ENCODE measurements at regions of chr10 and their contacts with region 1.

Region 1: GRCh38 chr10:80459047-80459931 is 5.2 kb downstream of the TSPAN14 start:
- DNase-seq: peak; percentile 84
- ATAC-seq: peak; percentile 52
- H3K4me3 Mint-ChIP-seq: peak overlapping the region; percentile 99
- H3K27ac Mint-ChIP-seq: peak overlapping the region; percentile 98
- H3K4me1 Mint-ChIP-seq: peaks cover 82% of the 10 kb centered on the region
- H3K27me3 Mint-ChIP-seq: no peaks in the 10 kb centered on the region

Region 2: GRCh38 chr10:79230328-79230830 is 1228.9 kb before region 1 on chr10:
- CTCF ChIA-PET with region 1: no interaction called
- POLR2A ChIA-PET with region 1: no interaction called
- intact Hi-C with region 1: no loop called
- DNase-seq: no peak
- ATAC-seq: no peak
- H3K4me3 Mint-ChIP-seq: no peak overlapping the region
- H3K27ac Mint-ChIP-seq: no peak overlapping the region
- H3K4me1 Mint-ChIP-seq: no peaks in the 10 kb centered on the region
- H3K27me3 Mint-ChIP-seq: no peaks in the 10 kb centered on the region

Region 3: DNA sequence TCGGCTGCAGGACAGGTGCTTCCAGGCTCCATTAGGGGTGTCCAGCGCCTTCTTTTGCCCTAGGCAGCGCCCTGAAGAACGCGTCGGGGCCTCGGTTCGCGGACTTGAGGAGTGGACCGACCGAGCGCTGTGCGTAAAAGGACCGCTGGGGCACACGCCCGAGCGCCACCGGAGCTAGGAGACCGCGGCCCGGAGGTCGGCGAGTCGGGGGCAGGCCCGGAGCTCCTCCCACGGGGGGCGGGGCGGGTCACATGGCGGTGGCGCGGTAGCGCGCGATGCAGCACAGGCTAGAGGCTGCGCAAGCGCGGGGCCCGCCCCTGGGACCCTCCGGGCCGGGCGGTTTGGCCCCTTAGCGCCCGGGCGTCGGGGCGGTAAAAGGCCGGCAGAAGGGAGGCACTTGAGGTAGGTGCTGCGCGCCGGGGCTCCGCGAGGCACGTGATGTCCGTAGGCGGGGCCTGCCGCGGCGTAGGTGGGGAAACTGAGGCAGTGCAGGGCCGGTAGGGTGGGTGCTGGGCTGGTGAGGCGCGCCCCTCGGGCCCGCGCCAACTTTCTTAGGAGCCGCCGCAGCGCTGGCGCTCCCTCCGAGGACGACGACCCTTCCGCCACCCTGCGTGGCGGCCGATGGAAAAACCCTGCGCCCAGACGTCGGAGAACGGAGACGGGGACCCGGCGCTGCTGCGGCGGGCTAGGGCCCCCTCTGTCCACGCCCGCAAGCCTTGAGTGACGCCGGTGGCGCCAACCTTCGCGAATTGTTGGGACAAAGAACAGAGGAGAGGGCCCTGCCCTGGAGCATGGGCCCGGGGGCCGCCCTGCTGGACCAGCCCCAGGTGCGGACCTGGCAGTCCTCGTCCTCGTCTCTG is 50.8 kb before region 1 on chr10 and contains the start of gene PRXL2A:
- CTCF ChIA-PET with region 1: interaction called, 6 read pairs
- POLR2A ChIA-PET with region 1: no interaction called
- intact Hi-C with region 1: loop called in 1 of 2 experiments (anchors 2 kb)
- DNase-seq: peak; percentile 91
- ATAC-seq: peak; percentile 84
- H3K4me3 Mint-ChIP-seq: peak within 1 kb of the TSS; percentile 76
- H3K27ac Mint-ChIP-seq: peak within 1 kb of the TSS; percentile 94
- H3K4me1 Mint-ChIP-seq: peaks cover 40% of the 10 kb centered on the region
- H3K27me3 Mint-ChIP-seq: no peaks in the 10 kb centered on the region
- total RNA-seq, gene PRXL2A: 15.0 to 17.6 TPM

Region 4: GRCh38 chr10:80472234-80473095 is 13.2 kb after region 1 on chr10:
- CTCF ChIA-PET with region 1: interaction called, 73 read pairs
- POLR2A ChIA-PET with region 1: interaction called, 9 read pairs
- intact Hi-C with region 1: loop called (anchors 1 kb)
- DNase-seq: peak; percentile 66
- ATAC-seq: peak; percentile 80
- H3K4me3 Mint-ChIP-seq: peak overlapping the region; percentile 61
- H3K27ac Mint-ChIP-seq: peak overlapping the region; percentile 91
- H3K4me1 Mint-ChIP-seq: peaks cover 93% of the 10 kb centered on the region
- H3K27me3 Mint-ChIP-seq: no peaks in the 10 kb centered on the region

Measured in activated CD4-positive, alpha-beta T cell treated with anti-CD3 and anti-CD28 coated beads for 36 hours (primary cell).